ENCODE measurements at regions of chr6 and their contacts with region 1.

Region 1: DNA sequence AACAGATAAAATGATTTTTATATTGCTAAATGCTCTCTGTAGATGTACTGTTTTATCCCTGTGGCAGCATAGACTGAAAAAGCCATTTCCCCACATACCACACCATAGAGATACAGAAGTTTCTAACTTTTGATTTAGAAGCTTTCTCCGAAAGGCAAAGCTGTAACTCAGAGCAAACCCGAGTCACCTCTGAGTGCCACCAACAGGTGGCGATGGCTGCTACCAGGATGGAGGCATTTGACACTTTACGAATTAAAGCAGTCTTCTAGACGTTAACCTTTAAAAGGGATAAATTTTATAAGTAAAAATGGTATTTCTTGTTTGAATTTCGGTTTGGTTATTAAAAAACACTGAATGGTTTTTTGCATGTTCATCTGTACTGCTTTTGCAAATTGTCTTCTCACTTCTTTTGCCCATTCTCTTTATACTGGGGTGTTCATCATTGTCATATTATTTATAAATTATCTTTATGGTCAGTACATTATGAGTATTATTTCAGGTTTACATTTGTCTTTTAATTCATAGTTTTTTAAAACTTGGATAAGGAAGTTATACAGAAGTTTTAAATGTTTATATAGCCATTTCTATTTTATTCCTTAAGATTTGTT is 201.0 kb upstream of the CEP162 start:
- DNase-seq: peak; percentile 31
- H3K4me3 ChIP-seq: no peak overlapping the region
- CTCF ChIP-seq: peak; percentile 91

Region 2: GRCh38 chr6:84161190-84161589 is 267.2 kb before region 1 on chr6:
- in situ Hi-C with region 1: no loop called
- DNase-seq: no peak
- H3K4me3 ChIP-seq: no peak overlapping the region
- CTCF ChIP-seq: no peak

Region 3: GRCh38 chr6:84220809-84221409 is 207.5 kb before region 1 on chr6:
- in situ Hi-C with region 1: no loop called
- DNase-seq: peak; percentile 27
- H3K4me3 ChIP-seq: no peak overlapping the region
- CTCF ChIP-seq: no peak

Region 4: DNA sequence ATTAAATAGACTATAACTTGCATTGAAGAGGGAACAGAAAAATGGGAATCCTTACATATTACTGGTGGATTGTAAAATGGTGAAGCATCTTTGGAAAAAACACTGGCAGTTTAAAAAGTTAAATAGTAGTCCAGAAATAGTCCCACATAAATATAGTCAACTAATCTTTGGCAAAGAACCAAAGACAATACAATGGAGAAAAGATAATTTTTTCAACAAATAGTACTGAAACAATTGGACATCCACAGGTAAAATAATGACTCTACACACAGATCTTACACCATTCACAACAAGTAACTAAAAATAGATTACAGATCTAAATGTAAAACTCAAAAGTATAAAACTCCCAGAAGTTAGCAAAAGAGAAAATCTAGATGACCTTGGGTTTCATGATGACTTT is 58.1 kb after region 1 on chr6:
- in situ Hi-C with region 1: no loop called
- DNase-seq: no peak
- H3K4me3 ChIP-seq: no peak overlapping the region
- CTCF ChIP-seq: no peak

Region 5: DNA sequence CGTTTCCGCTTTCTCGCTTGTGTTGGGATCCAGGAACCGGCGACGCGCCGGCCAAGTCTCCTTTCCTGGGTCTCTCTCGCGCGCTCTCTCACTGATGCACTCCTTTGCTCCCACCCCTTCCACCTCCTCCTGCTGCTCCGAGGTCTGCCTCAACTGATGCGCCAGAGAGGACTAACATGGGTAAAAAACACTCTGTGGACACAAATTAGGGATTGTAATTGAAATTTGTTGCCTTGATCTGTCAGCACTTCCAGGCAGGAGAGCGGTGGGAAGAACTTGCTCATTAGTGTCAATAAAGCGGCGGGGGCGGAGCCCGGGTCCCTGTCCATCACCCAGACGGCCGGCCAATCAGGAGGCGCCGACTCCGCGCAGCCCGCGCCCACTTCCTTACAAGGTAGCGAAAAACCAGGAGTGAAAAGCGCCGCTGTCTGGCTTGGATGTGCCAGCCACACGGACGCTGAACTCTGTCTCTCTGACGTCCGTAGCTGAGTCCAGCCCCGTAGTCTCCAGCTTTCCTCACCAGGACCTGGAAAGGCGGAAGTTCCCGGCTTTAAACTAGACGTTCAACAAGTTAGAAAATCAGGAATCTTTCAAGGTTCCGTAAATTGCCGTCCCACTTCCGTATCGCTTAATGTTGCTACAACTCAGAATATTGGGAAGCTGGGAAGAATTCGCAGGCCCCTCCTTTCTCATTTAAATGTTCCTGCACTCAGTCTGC is 336.1 kb after region 1 on chr6 and contains the start of gene TBX18:
- in situ Hi-C with region 1: loop called (anchors 10 kb)
- DNase-seq: peak; percentile 81
- H3K4me3 ChIP-seq: peak within 1 kb of the TSS; percentile 44
- CTCF ChIP-seq: no peak

Measured in astrocyte of the cerebellum (primary cell).